CD4-positive, alpha-beta memory T cell (primary cell): ENCODE measurements at regions of chr3 and their contacts with region 1.

Region 1: DNA sequence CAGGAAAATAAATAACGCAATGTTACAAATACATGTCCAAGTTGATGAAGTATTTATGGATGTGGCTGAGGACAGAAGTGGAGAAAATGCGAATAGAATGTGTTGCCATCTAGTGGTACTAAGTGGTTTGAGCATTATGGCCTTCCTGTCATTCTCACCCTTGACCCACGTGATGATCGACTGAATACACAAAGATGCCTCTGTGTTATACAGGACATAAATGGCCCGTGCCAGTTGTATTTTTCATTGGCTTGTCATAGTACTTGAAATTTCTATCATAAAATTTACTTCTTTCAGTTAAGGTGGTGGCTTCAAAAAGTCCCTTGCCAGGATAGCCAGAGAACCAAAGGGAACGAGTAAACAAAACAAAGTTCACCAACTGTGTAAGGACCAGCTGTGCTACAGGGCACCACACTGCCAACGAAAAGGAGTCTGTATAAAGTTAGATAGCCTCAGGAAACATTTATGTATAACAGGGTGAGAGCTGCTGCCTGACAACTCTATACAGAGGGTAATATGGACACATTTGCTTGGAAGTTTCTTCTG is 103.7 kb downstream of the MYH15 start:
- DNase-seq: peak in 3 of 5 donors; percentile 24 to 61 (median 48)
- H3K4me3 ChIP-seq: no peak overlapping the region
- H3K4me3 Mint-ChIP-seq: no peak overlapping the region
- H3K27ac ChIP-seq: no peak overlapping the region
- H3K27ac Mint-ChIP-seq: peak overlapping the region in 1 of 7 donors; percentile 8
- H3K4me1 ChIP-seq: no peaks in the 10 kb centered on the region
- H3K4me1 Mint-ChIP-seq: peaks cover 0 to 2% (median 0%) of the 10 kb centered on the region in 4 donors
- H3K27me3 ChIP-seq: no peaks in the 10 kb centered on the region
- H3K27me3 Mint-ChIP-seq: no peaks in the 10 kb centered on the region

Region 2: DNA sequence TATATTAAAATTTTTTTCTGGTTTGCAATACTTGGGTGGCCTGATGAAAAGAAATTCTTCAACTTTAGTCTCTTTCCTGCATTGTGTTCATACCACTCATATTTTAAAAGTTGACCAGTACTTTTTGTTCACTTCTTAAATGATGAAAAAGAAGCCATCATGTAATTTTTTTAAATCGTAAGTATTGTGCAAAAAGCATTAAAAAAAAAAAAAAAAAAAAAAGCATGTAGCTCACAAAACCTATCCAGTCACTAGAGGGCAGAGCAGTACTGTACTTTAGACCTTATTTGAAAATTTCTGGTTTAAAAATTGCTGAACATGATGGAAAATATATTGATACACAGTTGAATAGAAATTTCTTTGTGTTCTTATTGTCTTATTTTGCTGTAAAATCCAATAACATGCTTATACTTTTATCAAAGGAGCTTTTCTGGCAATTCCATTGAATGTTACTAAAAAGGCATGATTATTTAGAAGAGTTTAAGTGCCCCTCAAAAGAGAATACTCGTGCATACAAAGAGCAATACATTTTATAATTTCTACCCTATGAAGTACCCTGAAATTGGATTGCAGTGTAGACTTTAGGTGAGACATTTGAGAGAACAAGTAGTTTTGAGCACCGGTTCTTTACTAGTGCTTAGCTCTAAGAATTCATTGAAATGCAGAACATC is 746.3 kb before region 1 on chr3:
- CTCF ChIA-PET with region 1: no interaction called
- POLR2A ChIA-PET with region 1: no interaction called
- intact Hi-C with region 1: loop called (anchors 5 kb)
- DNase-seq: peak in 4 of 5 donors; percentile 19 to 36 (median 27)
- H3K4me3 ChIP-seq: no peak overlapping the region
- H3K4me3 Mint-ChIP-seq: no peak overlapping the region
- H3K27ac ChIP-seq: no peak overlapping the region
- H3K27ac Mint-ChIP-seq: no peak overlapping the region
- H3K4me1 ChIP-seq: peaks cover 17% of the 10 kb centered on the region
- H3K4me1 Mint-ChIP-seq: peaks cover 18 to 28% (median 22%) of the 10 kb centered on the region in 4 donors
- H3K27me3 ChIP-seq: no peaks in the 10 kb centered on the region
- H3K27me3 Mint-ChIP-seq: no peaks in the 10 kb centered on the region

Region 3: GRCh38 chr3:107938143-107938542 is 468.6 kb before region 1 on chr3:
- CTCF ChIA-PET with region 1: interaction called, 29 read pairs
- POLR2A ChIA-PET with region 1: no interaction called
- intact Hi-C with region 1: loop called (anchors 1 kb)
- DNase-seq: peak in 3 of 5 donors; percentile 10 to 23 (median 15)
- H3K4me3 ChIP-seq: no peak overlapping the region
- H3K4me3 Mint-ChIP-seq: no peak overlapping the region
- H3K27ac ChIP-seq: no peak overlapping the region
- H3K27ac Mint-ChIP-seq: no peak overlapping the region
- H3K4me1 ChIP-seq: peaks cover 15% of the 10 kb centered on the region
- H3K4me1 Mint-ChIP-seq: peaks cover 11 to 21% (median 16%) of the 10 kb centered on the region in 4 donors
- H3K27me3 ChIP-seq: no peaks in the 10 kb centered on the region
- H3K27me3 Mint-ChIP-seq: peaks cover 1 to 11% of the 10 kb centered on the region in 2 donors

Region 4: GRCh38 chr3:108100906-108101660 is 305.7 kb before region 1 on chr3:
- CTCF ChIA-PET with region 1: no interaction called
- POLR2A ChIA-PET with region 1: no interaction called
- intact Hi-C with region 1: no loop called
- DNase-seq: peak in 2 of 5 donors; percentile 28 to 74
- H3K4me3 ChIP-seq: no peak overlapping the region
- H3K4me3 Mint-ChIP-seq: peak overlapping the region in 5 of 8 donors; percentile 1 to 59 (median 42)
- H3K27ac ChIP-seq: no peak overlapping the region
- H3K27ac Mint-ChIP-seq: peak overlapping the region; percentile 55 to 87 (median 81)
- H3K4me1 ChIP-seq: peaks cover 29% of the 10 kb centered on the region
- H3K4me1 Mint-ChIP-seq: peaks cover 29 to 38% (median 35%) of the 10 kb centered on the region in 4 donors
- H3K27me3 ChIP-seq: no peaks in the 10 kb centered on the region
- H3K27me3 Mint-ChIP-seq: no peaks in the 10 kb centered on the region

Region 5: DNA sequence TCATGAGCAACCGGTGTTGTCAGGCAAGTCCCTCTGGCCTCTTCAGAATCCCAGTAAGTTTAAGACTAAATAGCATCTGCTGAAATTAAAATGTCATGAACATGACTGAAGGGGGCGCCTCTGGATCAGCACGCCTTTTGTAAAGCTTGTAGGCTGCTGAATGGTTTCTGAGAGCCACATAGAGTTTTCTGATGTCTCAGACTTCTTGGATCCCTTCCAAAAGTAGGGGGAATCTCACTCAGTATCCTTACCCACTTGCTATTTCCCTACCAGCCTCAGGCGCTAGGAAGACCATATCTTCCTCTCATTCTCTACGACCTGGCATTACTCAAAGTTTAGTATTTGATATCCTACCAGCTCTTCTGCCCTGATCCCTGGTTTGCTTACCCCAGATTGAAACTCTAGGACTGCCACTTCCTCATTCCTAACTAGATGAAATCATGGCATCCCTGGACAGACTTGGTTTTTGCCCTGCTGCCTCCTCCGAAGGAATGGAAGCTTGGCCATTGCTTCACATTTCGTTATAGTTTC is 253.2 kb before region 1 on chr3:
- CTCF ChIA-PET with region 1: interaction called, 36 read pairs
- POLR2A ChIA-PET with region 1: no interaction called
- intact Hi-C with region 1: no loop called
- DNase-seq: peak; percentile 38 to 46 (median 43)
- H3K4me3 ChIP-seq: no peak overlapping the region
- H3K4me3 Mint-ChIP-seq: no peak overlapping the region
- H3K27ac ChIP-seq: no peak overlapping the region
- H3K27ac Mint-ChIP-seq: peak overlapping the region in 3 of 7 donors; percentile 14 to 45 (median 29)
- H3K4me1 ChIP-seq: no peaks in the 10 kb centered on the region
- H3K4me1 Mint-ChIP-seq: peaks cover 5 to 14% (median 12%) of the 10 kb centered on the region in 4 donors
- H3K27me3 ChIP-seq: no peaks in the 10 kb centered on the region
- H3K27me3 Mint-ChIP-seq: no peaks in the 10 kb centered on the region

Region 6: GRCh38 chr3:108391917-108392593 is 14.7 kb before region 1 on chr3:
- CTCF ChIA-PET with region 1: interaction called, 23 read pairs
- POLR2A ChIA-PET with region 1: no interaction called
- intact Hi-C with region 1: no loop called
- DNase-seq: no peak
- H3K4me3 ChIP-seq: no peak overlapping the region
- H3K4me3 Mint-ChIP-seq: no peak overlapping the region
- H3K27ac ChIP-seq: no peak overlapping the region
- H3K27ac Mint-ChIP-seq: no peak overlapping the region
- H3K4me1 ChIP-seq: no peaks in the 10 kb centered on the region
- H3K4me1 Mint-ChIP-seq: peaks cover 0 to 7% (median 0%) of the 10 kb centered on the region in 4 donors
- H3K27me3 ChIP-seq: no peaks in the 10 kb centered on the region
- H3K27me3 Mint-ChIP-seq: peaks cover 5 to 8% of the 10 kb centered on the region in 2 donors

Region 7: GRCh38 chr3:108453565-108453964 is 46.8 kb after region 1 on chr3:
- CTCF ChIA-PET with region 1: no interaction called
- POLR2A ChIA-PET with region 1: no interaction called
- intact Hi-C with region 1: no loop called
- DNase-seq: no peak
- H3K4me3 ChIP-seq: no peak overlapping the region
- H3K4me3 Mint-ChIP-seq: no peak overlapping the region
- H3K27ac ChIP-seq: no peak overlapping the region
- H3K27ac Mint-ChIP-seq: no peak overlapping the region
- H3K4me1 ChIP-seq: no peaks in the 10 kb centered on the region
- H3K4me1 Mint-ChIP-seq: no peaks in the 10 kb centered on the region
- H3K27me3 ChIP-seq: no peaks in the 10 kb centered on the region
- H3K27me3 Mint-ChIP-seq: peaks cover 0 to 3% of the 10 kb centered on the region in 2 donors

Region 8: DNA sequence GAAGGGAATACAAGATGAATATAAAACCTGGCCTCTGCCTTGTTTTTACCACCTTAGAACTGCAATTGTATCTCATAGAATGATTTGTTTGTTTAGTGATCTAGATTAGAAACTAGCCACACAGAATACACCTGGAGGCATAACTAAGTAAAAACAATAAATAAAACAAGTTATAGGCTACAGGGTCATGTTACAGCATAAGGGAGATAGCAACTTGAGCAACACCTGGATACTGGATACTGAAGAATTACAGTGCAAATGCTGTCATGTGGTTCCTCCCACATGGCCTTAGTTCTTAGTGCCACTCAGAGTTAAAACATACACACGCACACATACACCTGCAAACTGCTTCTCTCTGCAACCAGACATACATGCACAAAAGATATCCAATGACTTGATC is 1494.0 kb after region 1 on chr3:
- CTCF ChIA-PET with region 1: no interaction called
- POLR2A ChIA-PET with region 1: no interaction called
- intact Hi-C with region 1: no loop called
- DNase-seq: no peak
- H3K4me3 ChIP-seq: no peak overlapping the region
- H3K4me3 Mint-ChIP-seq: peak overlapping the region in 6 of 8 donors; percentile 2 to 72 (median 50)
- H3K27ac ChIP-seq: no peak overlapping the region
- H3K27ac Mint-ChIP-seq: peak overlapping the region; percentile 10 to 89 (median 41)
- H3K4me1 ChIP-seq: peaks cover 22% of the 10 kb centered on the region
- H3K4me1 Mint-ChIP-seq: peaks cover 19 to 31% (median 26%) of the 10 kb centered on the region in 4 donors
- H3K27me3 ChIP-seq: no peaks in the 10 kb centered on the region
- H3K27me3 Mint-ChIP-seq: no peaks in the 10 kb centered on the region